MCF 10A (cell line): ENCODE measurements at regions of chr2 and their contacts with region 1.

Region 1: DNA sequence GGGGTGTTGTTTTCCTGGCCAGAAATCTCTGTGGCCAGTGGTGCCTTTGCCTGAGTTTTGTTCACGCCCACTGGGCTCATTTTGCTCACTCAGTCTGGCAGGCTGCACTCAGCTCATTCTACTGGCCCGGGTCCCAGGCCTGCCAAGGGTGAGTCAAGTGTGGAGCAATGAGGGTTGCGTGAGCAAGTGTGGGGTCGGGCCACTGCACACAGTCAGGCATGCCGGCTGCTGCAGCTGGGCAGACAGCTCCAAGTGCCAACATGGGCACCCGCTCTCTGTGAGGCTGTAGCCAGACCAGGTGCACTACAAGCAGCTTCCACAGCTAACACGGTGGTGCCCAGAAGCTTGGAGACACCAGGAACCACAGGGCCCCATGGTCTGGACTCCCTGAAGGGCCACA is 801.1 kb upstream of the RAB6C start:
- DNase-seq: peak; percentile 93
- H3K4me3 Mint-ChIP-seq: no peak overlapping the region
- H3K27ac Mint-ChIP-seq: peak overlapping the region; percentile 44
- H3K4me1 Mint-ChIP-seq: peaks cover 34% of the 10 kb centered on the region
- H3K27me3 Mint-ChIP-seq: no peaks in the 10 kb centered on the region
- CTCF ChIP-seq: no peak

Region 2: DNA sequence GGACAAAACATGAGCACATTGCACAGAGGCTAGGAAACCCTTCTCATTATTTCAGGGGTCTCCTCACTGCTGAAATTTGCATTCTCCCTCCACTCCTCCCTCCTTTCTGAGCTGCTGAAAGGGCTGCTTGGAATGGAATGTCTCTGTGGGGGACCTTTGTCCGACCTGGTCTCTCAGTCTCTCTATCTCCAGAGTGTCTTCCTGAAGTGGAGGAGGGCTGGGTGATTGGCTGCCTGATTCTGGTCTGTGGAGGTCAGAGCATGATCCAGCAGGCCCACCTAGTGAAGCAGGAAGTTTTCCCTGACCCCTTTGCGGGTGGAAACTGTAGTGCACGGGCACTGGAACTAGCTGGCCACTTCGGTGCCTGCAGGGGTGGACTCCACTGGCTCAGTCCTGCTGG is 299.2 kb before region 1 on chr2:
- CTCF ChIA-PET with region 1: no interaction called
- POLR2A ChIA-PET with region 1: no interaction called
- intact Hi-C with region 1: loop called (anchors 10 kb)
- DNase-seq: no peak
- H3K4me3 Mint-ChIP-seq: no peak overlapping the region
- H3K27ac Mint-ChIP-seq: no peak overlapping the region
- H3K4me1 Mint-ChIP-seq: peaks cover 5% of the 10 kb centered on the region
- H3K27me3 Mint-ChIP-seq: no peaks in the 10 kb centered on the region
- CTCF ChIP-seq: no peak